Left colon (tissue), 2 donors: ENCODE measurements at regions of chr1 and their contacts with region 1.

Region 1: GRCh38 chr1:205977402-205978014 is 25.7 kb downstream of the RAB7B start:
- DNase-seq: peak; percentile 56 to 60
- ATAC-seq: peak; percentile 82

Region 2: DNA sequence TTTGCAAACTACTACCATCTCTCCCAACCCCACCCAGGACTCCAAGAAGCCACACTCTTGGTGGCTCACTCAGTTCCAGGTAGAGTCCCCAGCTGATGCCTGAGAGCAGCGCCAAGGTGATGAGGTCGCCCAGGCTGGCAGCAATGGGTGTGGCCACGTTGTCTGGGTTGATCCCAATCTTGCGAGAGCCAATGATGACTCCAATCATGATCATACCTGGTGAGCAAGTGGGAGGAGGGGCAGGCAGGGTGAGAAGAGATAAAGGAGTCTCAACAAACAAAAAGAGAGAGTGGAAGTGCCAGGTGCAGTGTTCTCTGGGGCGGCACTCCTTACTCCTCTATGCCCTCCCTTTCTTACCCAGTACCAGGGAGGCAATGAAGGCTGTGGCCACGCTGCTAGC is 178.9 kb before region 1 on chr1:
- intact Hi-C with region 1: loop called (anchors 5 kb)
- DNase-seq: no peak
- ATAC-seq: peak; percentile 51

Region 3: DNA sequence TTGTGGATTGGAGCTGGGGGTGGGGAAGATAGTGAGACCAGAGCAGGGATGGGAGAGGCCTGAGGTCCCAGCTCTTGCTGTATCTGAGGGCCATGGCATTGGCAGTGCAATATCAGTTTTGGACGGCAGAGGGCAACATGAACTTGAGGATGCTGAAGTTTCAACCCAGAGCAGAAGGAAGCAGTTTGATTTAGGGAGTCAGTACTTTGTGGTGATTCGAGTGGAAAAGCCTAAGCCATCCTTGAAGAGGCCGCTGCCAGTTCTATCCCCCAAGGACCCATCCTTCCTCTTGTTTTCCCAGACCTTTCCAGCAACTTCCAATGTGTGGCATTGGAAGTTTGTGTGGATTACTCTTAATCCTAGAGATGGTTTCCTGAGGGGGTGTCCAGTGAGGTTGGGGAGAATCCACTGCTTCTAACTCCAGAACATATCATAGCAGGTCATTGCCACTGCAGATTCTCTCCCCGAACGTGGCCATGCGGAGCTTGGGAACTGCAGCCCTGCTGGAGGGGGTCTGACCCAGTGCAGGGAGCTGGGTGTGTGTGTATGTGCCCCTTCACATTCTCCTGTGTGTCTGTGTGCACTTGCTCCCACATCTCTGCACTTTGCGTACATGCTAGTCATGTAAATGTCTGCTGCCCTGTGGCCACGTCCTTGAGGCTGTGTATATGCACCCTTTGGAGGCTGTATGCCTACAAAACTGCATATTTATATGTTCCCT is 58.3 kb before region 1 on chr1:
- intact Hi-C with region 1: loop called (anchors 5 kb)
- DNase-seq: peak; percentile 45 to 78
- ATAC-seq: peak; percentile 81